ENCODE measurements at regions of chr12 and their contacts with region 1.

Region 1: GRCh38 chr12:69585189-69586062 is at the start of gene CCT2:
- DNase-seq: peak; percentile 94 to 95
- ATAC-seq: peak; percentile 98 to 99
- H3K4me3 ChIP-seq: peak within 1 kb of the TSS; percentile 92 to 98 (median 96)
- H3K27ac ChIP-seq: peak within 1 kb of the TSS; percentile 89 to 96 (median 94)
- H3K4me1 ChIP-seq: peaks cover 5 to 9% of the 10 kb centered on the region in 2 donors
- H3K27me3 ChIP-seq: no peaks in the 10 kb centered on the region
- CTCF ChIP-seq: peak in 4 of 5 experiments; percentile 18 to 32 (median 26)
- POLR2A ChIP-seq: peak; percentile 87 to 90
- total RNA-seq, gene CCT2: 124 to 153 (median 138) TPM

Region 2: DNA sequence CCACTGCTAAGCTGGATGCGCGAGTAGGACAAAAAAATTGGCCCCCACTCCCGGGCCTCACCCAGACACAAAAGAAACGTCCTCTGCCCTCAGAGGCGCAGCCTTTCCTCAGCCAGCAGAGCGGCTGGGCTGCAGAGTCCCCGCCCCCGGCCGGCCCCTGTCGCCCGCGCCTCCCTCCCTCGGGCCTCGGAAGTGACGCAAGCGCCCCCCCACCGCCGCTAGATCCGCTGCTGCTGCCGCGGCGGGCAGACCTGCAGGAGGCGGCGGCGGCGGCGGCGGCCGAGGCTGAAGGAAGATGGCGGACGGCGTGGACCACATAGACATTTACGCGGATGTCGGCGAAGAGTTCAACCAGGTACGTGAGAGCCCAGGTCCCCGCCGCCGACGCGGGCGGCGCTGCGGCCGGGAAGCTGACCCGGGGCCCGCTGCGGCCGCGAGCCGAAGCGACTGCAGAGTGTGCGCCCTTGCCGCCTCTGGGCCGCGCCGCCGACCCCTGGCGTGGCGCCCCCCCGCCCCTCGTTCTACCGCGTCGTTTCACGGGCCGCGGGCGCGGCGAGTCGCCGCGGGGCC is 346.0 kb before region 1 on chr12 and contains the start of gene CPSF6:
- in situ Hi-C with region 1: no loop called
- intact Hi-C with region 1: loop called (anchors 5 kb)
- DNase-seq: peak; percentile 90 to 91
- ATAC-seq: peak; percentile 95 to 96
- H3K4me3 ChIP-seq: peak within 1 kb of the TSS; percentile 80 to 94 (median 82)
- H3K27ac ChIP-seq: peak within 1 kb of the TSS; percentile 86 to 93 (median 89)
- H3K4me1 ChIP-seq: peaks cover 37 to 40% of the 10 kb centered on the region in 2 donors
- H3K27me3 ChIP-seq: no peaks in the 10 kb centered on the region
- CTCF ChIP-seq: peak in 1 of 5 experiments; percentile 25
- POLR2A ChIP-seq: peak; percentile 97 to 98
- total RNA-seq, gene CPSF6: 10.4 to 27.6 (median 18.6) TPM

Region 3: DNA sequence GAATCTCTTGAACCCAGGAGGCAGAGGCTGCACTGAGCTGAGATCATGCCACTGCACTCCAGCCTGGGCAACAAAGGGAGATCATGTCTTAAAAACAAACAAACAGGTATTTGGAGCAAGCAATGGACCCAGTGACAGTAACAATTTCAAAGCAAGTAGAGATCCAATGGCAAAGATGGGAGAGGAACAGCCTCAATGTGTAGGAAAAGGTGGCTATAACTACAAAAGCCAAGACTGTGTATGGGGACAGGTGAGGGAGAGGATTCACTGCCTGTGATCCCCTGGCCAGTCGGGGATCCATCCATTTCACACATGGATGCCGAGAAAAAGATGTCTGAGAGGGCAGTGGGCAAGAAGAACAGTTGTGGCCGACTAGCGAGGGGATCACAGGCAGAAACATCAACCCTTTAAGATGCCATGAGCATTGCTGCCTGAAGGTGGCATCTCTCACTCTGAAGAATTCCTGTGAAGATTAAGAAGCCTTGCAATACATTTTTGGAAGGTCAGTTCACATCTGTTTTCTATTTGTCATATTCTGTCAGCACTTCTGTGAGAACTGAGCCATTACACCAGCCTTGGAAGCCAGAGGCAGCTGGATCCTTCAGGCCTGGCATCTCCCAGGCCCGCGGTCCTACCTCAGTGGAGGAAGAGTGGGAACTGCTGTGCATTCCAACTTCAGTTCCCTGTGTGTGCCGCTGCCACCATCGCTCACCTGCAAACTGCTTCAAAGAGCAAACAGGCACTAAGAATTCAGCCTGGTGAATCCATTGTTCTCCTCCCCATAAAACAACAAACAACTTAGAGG is 169.8 kb before region 1 on chr12:
- in situ Hi-C with region 1: no loop called
- intact Hi-C with region 1: loop called (anchors 5 kb)
- DNase-seq: peak; percentile 12 to 41
- ATAC-seq: peak; percentile 93 to 94
- H3K4me3 ChIP-seq: no peak overlapping the region
- H3K27ac ChIP-seq: no peak overlapping the region
- H3K4me1 ChIP-seq: peaks cover 6 to 7% of the 10 kb centered on the region in 2 donors
- H3K27me3 ChIP-seq: no peaks in the 10 kb centered on the region
- CTCF ChIP-seq: peak; percentile 48 to 69 (median 67)
- POLR2A ChIP-seq: no peak

Region 4: DNA sequence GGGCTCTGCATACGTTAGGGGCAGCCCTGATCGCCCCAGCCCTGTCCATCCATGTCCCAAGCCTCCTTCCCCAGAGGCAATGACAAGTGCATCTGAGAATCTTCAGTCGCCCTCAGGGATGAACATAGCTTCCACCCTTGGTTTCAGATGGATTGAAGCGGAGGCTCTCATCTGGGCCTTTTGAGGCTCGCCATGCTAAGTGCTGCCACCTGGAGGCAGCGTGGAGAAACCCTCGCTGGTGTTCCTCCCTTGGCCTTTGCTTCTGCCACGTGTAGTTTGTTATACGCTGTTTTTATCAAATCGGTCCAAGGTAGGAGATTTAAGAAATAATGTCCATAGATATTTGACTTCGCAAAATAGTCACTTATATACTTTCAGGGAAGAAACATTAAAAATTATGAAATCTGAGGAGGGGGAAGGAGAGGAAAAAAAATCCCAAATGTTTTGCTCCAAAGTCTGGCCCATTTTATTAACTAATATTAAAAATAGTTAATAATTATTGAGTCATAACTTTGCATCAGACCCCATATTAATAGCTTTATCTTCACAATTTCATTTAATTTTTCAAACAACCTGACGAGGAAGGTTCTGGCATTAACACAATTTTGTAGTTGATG is 54.1 kb after region 1 on chr12:
- in situ Hi-C with region 1: no loop called
- intact Hi-C with region 1: loop called (anchors 5 kb)
- DNase-seq: peak in 1 of 2 donors; percentile 56
- ATAC-seq: peak in 1 of 2 donors; percentile 30
- H3K4me3 ChIP-seq: no peak overlapping the region
- H3K27ac ChIP-seq: no peak overlapping the region
- H3K4me1 ChIP-seq: peaks cover 5 to 12% of the 10 kb centered on the region in 2 donors
- H3K27me3 ChIP-seq: no peaks in the 10 kb centered on the region
- CTCF ChIP-seq: peak; percentile 64 to 87 (median 69)
- POLR2A ChIP-seq: no peak

Region 5: GRCh38 chr12:69738351-69739286 is 153.2 kb after region 1 on chr12 and contains the start of gene RAB3IP:
- in situ Hi-C with region 1: no loop called
- intact Hi-C with region 1: loop called (anchors 10 kb)
- DNase-seq: peak; percentile 82 to 85
- ATAC-seq: peak; percentile 91 to 93
- H3K4me3 ChIP-seq: peak within 1 kb of the TSS; percentile 67 to 95 (median 74)
- H3K27ac ChIP-seq: peak within 1 kb of the TSS; percentile 74 to 89 (median 86)
- H3K4me1 ChIP-seq: peaks cover 7 to 8% of the 10 kb centered on the region in 2 donors
- H3K27me3 ChIP-seq: no peaks in the 10 kb centered on the region
- CTCF ChIP-seq: peak; percentile 17 to 86 (median 61)
- POLR2A ChIP-seq: peak; percentile 74 to 81
- total RNA-seq, gene RAB3IP: 18.6 to 27.4 (median 20.3) TPM